Naive thymus-derived CD4-positive, alpha-beta T cell (primary cell): ENCODE measurements at regions of chr3 and their contacts with region 1.

Region 1: GRCh38 chr3:196711838-196712513 is at the starts of genes CEP19 and PIGX:
- DNase-seq: peak; percentile 92 to 97 (median 94)
- ATAC-seq: peak; percentile 92
- H3K4me3 ChIP-seq: peak within 1 kb of the TSS; percentile 79
- H3K4me3 Mint-ChIP-seq: peak within 1 kb of the TSS; percentile 84 to 98 (median 94)
- H3K27ac ChIP-seq: peak within 1 kb of the TSS; percentile 96
- H3K27ac Mint-ChIP-seq: peak within 1 kb of the TSS; percentile 91 to 99 (median 96)
- H3K4me1 ChIP-seq: peaks cover 12 to 14% of the 10 kb centered on the region in 2 donors
- H3K4me1 Mint-ChIP-seq: peaks cover 16 to 42% (median 34%) of the 10 kb centered on the region in 7 donors
- H3K27me3 ChIP-seq: no peaks in the 10 kb centered on the region
- H3K27me3 Mint-ChIP-seq: no peaks in the 10 kb centered on the region
- total RNA-seq, gene CEP19: 0.96 to 8.1 (median 6.9) TPM
- total RNA-seq, gene PIGX: 13.7 to 58.5 (median 17.3) TPM

Region 2: GRCh38 chr3:196432137-196432879 is 279.7 kb before region 1 on chr3 and contains the start of gene UBXN7:
- CTCF ChIA-PET with region 1: no interaction called
- POLR2A ChIA-PET with region 1: no interaction called
- intact Hi-C with region 1: loop called (anchors 1 to 5 kb)
- DNase-seq: peak; percentile 92 to 97 (median 95)
- ATAC-seq: peak; percentile 94
- H3K4me3 ChIP-seq: peak within 1 kb of the TSS; percentile 100
- H3K4me3 Mint-ChIP-seq: peak within 1 kb of the TSS; percentile 81 to 98 (median 86)
- H3K27ac ChIP-seq: peak within 1 kb of the TSS; percentile 90
- H3K27ac Mint-ChIP-seq: peak within 1 kb of the TSS; percentile 68 to 95 (median 81)
- H3K4me1 ChIP-seq: peaks cover 4 to 6% of the 10 kb centered on the region in 2 donors
- H3K4me1 Mint-ChIP-seq: peaks cover 17 to 39% (median 32%) of the 10 kb centered on the region in 7 donors
- H3K27me3 ChIP-seq: no peaks in the 10 kb centered on the region
- H3K27me3 Mint-ChIP-seq: peaks cover 0 to 2% (median 0%) of the 10 kb centered on the region in 5 donors
- total RNA-seq, gene UBXN7: 52.6 to 90.6 (median 77.0) TPM

Region 3: DNA sequence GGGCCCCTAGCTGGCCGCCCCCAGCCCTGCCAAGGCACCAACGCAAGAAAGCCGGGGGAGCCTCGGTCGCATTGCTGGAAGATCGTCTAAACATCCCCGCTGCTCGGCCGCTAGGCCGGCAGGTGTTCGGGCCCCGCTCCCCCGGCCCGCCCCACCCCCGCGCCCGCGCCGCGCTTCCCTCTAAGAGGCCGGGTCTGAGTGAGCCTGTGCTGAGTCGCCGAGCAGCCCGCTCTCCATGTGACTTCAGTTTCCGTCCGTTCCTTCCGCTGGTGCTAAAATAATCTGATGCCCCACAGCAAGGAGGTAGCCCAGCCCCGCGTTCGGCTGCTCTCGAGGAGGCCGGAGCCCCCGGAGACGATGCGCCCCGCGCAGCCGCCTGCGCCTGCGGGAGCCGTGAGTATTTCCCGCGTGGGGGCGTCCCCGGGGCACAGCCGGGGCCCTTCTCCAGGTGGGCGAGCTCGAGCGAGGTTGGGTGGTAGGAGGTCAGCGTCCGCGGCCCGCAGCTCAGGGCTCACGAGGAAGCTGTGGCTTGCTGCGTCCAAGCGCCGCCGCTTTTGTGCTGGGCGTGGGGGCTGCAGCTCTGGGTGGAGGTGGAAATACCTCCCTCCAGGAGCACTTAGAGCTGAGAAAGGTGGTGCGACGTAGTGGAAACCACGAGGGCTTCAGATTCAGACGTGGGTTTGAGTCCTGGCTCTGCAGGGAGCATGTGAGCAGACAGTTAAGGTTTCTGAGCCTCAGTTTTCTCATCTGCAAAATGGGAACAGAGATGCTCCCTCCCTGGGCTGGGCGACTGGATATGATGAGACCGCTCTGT is 72.3 kb before region 1 on chr3 and contains the start of gene NRROS:
- CTCF ChIA-PET with region 1: no interaction called
- POLR2A ChIA-PET with region 1: no interaction called
- intact Hi-C with region 1: loop called in 1 of 2 experiments (anchors 2 kb)
- DNase-seq: peak; percentile 25 to 71 (median 46)
- ATAC-seq: peak; percentile 70
- H3K4me3 ChIP-seq: peak within 1 kb of the TSS; percentile 75
- H3K4me3 Mint-ChIP-seq: peak within 1 kb of the TSS; percentile 75 to 94 (median 92)
- H3K27ac ChIP-seq: peak within 1 kb of the TSS; percentile 79
- H3K27ac Mint-ChIP-seq: peak within 1 kb of the TSS; percentile 74 to 95 (median 92)
- H3K4me1 ChIP-seq: peaks cover 27 to 36% of the 10 kb centered on the region in 2 donors
- H3K4me1 Mint-ChIP-seq: peaks cover 49 to 92% (median 71%) of the 10 kb centered on the region in 7 donors
- H3K27me3 ChIP-seq: no peaks in the 10 kb centered on the region
- H3K27me3 Mint-ChIP-seq: no peaks in the 10 kb centered on the region
- total RNA-seq, gene NRROS: 9.8 to 53.3 (median 14.2) TPM

Region 4: DNA sequence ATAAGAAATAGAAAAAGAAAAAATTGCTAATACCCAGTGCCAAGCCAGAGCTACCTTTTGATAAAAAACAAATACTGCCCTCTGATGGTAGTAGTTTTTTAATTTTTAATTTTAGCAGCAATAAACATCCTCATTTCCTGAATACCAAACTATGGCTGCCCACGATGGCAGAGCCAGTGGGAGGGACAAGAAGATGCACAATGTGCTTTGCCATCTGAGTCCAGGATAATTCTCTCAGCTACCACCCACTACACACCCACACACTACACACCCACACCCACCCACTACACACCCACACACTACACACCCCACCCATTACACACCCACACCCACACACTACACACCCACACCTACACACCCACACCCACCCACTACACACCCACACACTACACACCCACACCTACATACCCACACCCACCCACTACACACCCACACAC is 17.8 kb before region 1 on chr3:
- CTCF ChIA-PET with region 1: no interaction called
- POLR2A ChIA-PET with region 1: no interaction called
- intact Hi-C with region 1: loop called in 1 of 2 experiments (anchors 2 kb)
- DNase-seq: peak in 6 of 9 donors; percentile 18 to 55 (median 46)
- ATAC-seq: peak; percentile 78
- H3K4me3 ChIP-seq: no peak overlapping the region
- H3K4me3 Mint-ChIP-seq: no peak overlapping the region
- H3K27ac ChIP-seq: no peak overlapping the region
- H3K27ac Mint-ChIP-seq: peak overlapping the region in 3 of 9 donors; percentile 33 to 84 (median 65)
- H3K4me1 ChIP-seq: peaks cover 0 to 12% of the 10 kb centered on the region in 2 donors
- H3K4me1 Mint-ChIP-seq: peaks cover 0 to 14% (median 7%) of the 10 kb centered on the region in 7 donors
- H3K27me3 ChIP-seq: no peaks in the 10 kb centered on the region
- H3K27me3 Mint-ChIP-seq: no peaks in the 10 kb centered on the region

Region 5: DNA sequence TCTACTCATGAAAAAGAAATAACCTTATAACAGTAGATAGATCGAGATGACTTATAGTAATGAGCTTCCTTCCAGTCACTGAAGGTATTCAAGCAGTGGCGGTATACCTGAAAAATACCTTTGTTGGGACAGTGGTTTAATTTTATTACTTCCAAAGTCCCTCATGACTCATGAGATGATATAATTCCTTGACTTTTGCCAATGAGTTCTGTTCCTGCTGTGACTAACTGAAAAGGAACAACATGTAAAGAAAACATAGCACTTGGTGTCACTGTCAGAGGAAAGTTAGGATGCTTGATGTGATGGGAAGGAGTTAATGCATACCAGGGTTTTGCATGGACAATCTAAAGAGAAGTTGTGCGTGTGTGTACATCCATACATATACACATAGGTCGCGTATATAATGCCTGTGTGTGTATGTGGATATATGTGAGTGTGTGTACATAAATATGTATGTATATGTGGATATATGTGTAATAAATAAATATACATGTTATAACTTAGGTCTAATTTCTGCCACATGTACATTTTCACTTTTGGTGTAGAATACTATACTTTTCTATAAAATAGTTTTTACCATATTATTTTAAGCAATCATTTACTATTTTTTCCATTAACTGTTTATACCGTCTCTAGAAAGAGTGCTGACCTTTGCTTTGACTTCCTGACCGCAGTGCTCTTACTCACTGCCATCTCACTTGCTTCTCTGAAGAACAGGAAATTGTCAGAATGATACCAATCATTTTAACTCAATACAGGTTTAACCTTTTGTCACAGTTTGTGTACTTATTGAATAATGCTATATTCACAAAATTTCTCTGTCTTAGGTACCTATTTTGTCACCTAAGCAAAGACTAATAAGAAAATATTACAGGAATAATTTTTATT is 15.1 kb after region 1 on chr3:
- CTCF ChIA-PET with region 1: no interaction called
- POLR2A ChIA-PET with region 1: no interaction called
- intact Hi-C with region 1: no loop called
- DNase-seq: no peak
- ATAC-seq: no peak
- H3K4me3 ChIP-seq: no peak overlapping the region
- H3K4me3 Mint-ChIP-seq: peak overlapping the region in 1 of 10 donors; percentile 8
- H3K27ac ChIP-seq: no peak overlapping the region
- H3K27ac Mint-ChIP-seq: peak overlapping the region in 1 of 9 donors; percentile 61
- H3K4me1 ChIP-seq: peaks cover 0 to 12% of the 10 kb centered on the region in 2 donors
- H3K4me1 Mint-ChIP-seq: peaks cover 0 to 38% (median 9%) of the 10 kb centered on the region in 7 donors
- H3K27me3 ChIP-seq: no peaks in the 10 kb centered on the region
- H3K27me3 Mint-ChIP-seq: no peaks in the 10 kb centered on the region

Region 6: DNA sequence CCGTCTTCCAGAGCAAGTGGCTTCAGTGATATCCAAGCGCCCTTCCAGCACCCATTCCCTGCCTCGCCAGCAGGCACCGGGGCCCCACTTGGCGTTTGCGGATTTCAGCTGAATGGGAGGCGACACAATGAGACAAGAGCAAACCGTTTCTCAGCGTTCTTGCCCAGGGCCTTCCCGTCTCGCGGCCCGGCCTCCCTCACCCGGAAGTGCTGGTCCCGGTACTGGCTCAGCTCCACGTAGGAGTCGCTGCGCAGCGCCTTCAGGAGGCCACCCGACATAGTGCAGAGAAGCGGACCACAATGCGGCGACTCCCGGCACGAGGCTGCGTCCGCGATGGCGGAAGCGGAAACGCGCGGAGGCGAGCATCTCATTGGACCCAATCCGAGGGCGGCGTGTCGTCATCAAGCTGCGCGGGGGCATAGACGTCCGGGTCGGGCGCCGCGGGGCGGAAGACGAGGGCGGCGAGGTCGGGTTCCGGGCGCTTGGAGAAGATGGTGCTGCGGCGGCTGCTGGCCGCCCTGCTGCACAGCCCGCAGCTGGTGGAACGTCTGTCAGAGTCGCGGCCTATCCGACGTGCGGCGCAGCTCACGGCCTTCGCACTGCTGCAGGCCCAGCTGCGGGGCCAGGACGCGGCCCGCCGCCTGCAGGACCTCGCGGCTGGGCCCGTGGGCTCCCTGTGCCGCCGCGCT is 230.4 kb after region 1 on chr3 and contains the start of gene NCBP2:
- CTCF ChIA-PET with region 1: no interaction called
- POLR2A ChIA-PET with region 1: interaction called, 3 read pairs
- intact Hi-C with region 1: loop called (anchors 1 kb)
- DNase-seq: peak; percentile 98 to 100 (median 99)
- ATAC-seq: peak; percentile 97
- H3K4me3 ChIP-seq: peak within 1 kb of the TSS; percentile 100
- H3K4me3 Mint-ChIP-seq: peak within 1 kb of the TSS; percentile 94 to 99 (median 98)
- H3K27ac ChIP-seq: peak within 1 kb of the TSS; percentile 94
- H3K27ac Mint-ChIP-seq: peak within 1 kb of the TSS; percentile 96 to 100 (median 98)
- H3K4me1 ChIP-seq: peaks cover 16 to 20% of the 10 kb centered on the region in 2 donors
- H3K4me1 Mint-ChIP-seq: peaks cover 30 to 64% (median 49%) of the 10 kb centered on the region in 7 donors
- H3K27me3 ChIP-seq: no peaks in the 10 kb centered on the region
- H3K27me3 Mint-ChIP-seq: peaks cover 0 to 5% (median 0%) of the 10 kb centered on the region in 5 donors
- total RNA-seq, gene NCBP2: 42.9 to 77.3 (median 67.5) TPM